Activated CD4-positive, alpha-beta T cell treated with anti-CD3 and anti-CD28 coated beads, Interleukin-2, amount 10 ng/mL, durations not matched to agents 7 days and 5 days (primary cell): ENCODE measurements at regions of chr4 and their contacts with region 1.

Region 1: GRCh38 chr4:6688879-6689505 is 4.7 kb upstream of the S100P start:
- DNase-seq: peak; percentile 83
- H3K4me3 Mint-ChIP-seq: peak overlapping the region; percentile 84
- H3K27ac Mint-ChIP-seq: peak overlapping the region; percentile 96
- H3K4me1 Mint-ChIP-seq: peaks cover 85% of the 10 kb centered on the region
- H3K27me3 Mint-ChIP-seq: no peaks in the 10 kb centered on the region

Region 2: GRCh38 chr4:6834867-6835266 is 145.9 kb after region 1 on chr4:
- CTCF ChIA-PET with region 1: no interaction called
- POLR2A ChIA-PET with region 1: interaction called, 10 read pairs
- DNase-seq: no peak
- H3K4me3 Mint-ChIP-seq: no peak overlapping the region
- H3K27ac Mint-ChIP-seq: no peak overlapping the region
- H3K4me1 Mint-ChIP-seq: no peaks in the 10 kb centered on the region
- H3K27me3 Mint-ChIP-seq: no peaks in the 10 kb centered on the region